ENCODE measurements at regions of chr10 and their contacts with region 1.

Region 1: DNA sequence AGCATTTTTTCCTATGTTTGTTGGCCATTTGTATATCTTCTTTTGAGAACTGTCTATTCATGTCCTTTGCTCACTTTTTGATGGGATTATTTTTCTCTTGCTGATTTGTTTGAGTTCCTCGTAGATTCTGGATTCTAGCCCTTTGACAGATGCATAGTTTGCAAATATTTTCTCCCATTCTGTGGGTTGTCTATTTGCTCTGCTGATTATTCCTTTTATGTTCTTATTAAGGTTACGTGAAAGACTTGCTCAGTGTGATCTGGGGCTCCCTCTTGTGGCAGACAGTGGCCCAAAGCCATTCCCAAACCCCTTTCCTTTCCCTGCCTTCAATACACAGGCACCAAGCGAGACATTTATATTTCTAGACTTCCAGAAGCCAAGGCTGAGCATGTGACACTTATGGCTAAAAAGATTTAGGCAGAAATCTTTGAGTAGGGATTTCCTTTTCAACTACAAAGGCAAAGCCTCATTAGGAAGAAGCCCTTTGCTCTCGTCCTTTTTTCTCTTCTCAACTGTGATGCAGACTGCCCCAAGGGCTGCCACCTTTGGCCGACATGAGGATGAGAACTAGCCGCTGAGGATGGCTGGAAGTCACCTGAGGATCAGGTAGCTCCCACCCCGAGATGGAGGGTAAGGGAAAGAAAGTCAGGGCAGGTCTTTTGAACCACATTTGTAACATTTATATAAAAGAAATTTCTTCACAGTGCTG is 23.6 kb downstream of the ST8SIA6 start:
- DNase-seq: peak; percentile 70
- ATAC-seq: no peak
- H3K4me3 Mint-ChIP-seq: no peak overlapping the region
- H3K27ac Mint-ChIP-seq: no peak overlapping the region
- H3K4me1 Mint-ChIP-seq: peaks cover 53% of the 10 kb centered on the region
- H3K27me3 Mint-ChIP-seq: peaks cover 2% of the 10 kb centered on the region
- CTCF ChIP-seq: peak; percentile 94

Region 2: GRCh38 chr10:16828114-16828568 is 602.7 kb before region 1 on chr10:
- CTCF ChIA-PET with region 1: interaction called, 3 read pairs
- POLR2A ChIA-PET with region 1: no interaction called
- intact Hi-C with region 1: loop called (anchors 10 kb)
- DNase-seq: peak; percentile 66
- ATAC-seq: peak; percentile 95
- H3K4me3 Mint-ChIP-seq: no peak overlapping the region
- H3K27ac Mint-ChIP-seq: no peak overlapping the region
- H3K4me1 Mint-ChIP-seq: no peaks in the 10 kb centered on the region
- H3K27me3 Mint-ChIP-seq: no peaks in the 10 kb centered on the region
- CTCF ChIP-seq: peak; percentile 77

Region 3: DNA sequence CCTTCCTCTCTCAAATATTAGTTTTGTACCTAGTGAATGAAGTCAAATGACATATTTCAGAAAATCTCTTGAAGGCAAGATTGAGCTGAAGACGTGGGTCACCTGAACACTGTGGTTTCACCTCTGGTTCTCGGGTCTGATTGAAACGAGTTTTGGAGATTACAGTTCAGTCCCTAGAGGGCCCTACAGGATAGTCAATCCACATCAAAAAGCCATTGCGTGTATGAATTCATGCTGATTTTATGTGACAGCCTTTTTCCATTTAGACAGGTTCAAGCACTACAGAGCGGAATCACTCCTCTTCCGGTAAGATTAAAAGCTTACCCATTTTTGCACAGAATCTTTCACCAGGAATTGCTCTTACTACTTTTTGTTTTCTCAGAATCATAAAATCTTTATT is 140.6 kb before region 1 on chr10:
- CTCF ChIA-PET with region 1: interaction called, 40 read pairs
- POLR2A ChIA-PET with region 1: no interaction called
- intact Hi-C with region 1: loop called (anchors 5 kb)
- DNase-seq: peak; percentile 35
- ATAC-seq: peak; percentile 97
- H3K4me3 Mint-ChIP-seq: no peak overlapping the region
- H3K27ac Mint-ChIP-seq: peak overlapping the region; percentile 82
- H3K4me1 Mint-ChIP-seq: peaks cover 10% of the 10 kb centered on the region
- H3K27me3 Mint-ChIP-seq: peaks cover 16% of the 10 kb centered on the region
- CTCF ChIP-seq: peak; percentile 39

Region 4: GRCh38 chr10:17375936-17376584 is 54.7 kb before region 1 on chr10:
- CTCF ChIA-PET with region 1: interaction called, 12 read pairs
- POLR2A ChIA-PET with region 1: no interaction called
- intact Hi-C with region 1: no loop called
- DNase-seq: peak; percentile 53
- ATAC-seq: peak; percentile 42
- H3K4me3 Mint-ChIP-seq: no peak overlapping the region
- H3K27ac Mint-ChIP-seq: no peak overlapping the region
- H3K4me1 Mint-ChIP-seq: no peaks in the 10 kb centered on the region
- H3K27me3 Mint-ChIP-seq: peaks cover 1% of the 10 kb centered on the region
- CTCF ChIP-seq: peak; percentile 59

Region 5: DNA sequence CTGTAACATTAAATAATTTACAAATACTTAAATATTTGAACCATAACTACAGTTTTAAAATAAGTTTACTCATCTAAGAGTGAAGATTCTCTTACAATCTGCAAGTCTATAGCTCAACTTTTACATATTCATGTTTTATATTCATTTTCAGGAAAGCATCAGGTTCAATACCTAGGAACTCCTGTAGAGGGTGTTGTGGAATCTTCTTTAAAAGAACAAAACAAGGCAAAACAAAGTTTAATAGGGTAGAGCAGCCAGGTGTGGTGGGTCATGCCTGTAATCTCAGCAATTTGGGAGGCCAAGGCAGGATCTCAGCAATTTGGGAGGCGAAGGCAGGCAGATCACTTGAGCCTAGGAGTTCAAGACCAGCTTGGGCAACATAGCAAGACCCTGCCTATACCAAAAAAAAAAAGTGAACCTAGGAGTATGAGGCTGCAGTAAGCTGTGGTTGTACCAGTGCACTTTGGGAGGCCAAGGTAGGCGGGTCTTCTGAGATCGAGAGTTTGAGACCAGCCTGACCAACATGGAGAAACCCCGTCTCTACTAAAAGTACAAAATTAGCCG is 21.5 kb before region 1 on chr10:
- CTCF ChIA-PET with region 1: interaction called, 34 read pairs
- POLR2A ChIA-PET with region 1: no interaction called
- intact Hi-C with region 1: no loop called
- DNase-seq: no peak
- ATAC-seq: peak; percentile 51
- H3K4me3 Mint-ChIP-seq: no peak overlapping the region
- H3K27ac Mint-ChIP-seq: no peak overlapping the region
- H3K4me1 Mint-ChIP-seq: peaks cover 10% of the 10 kb centered on the region
- H3K27me3 Mint-ChIP-seq: no peaks in the 10 kb centered on the region
- CTCF ChIP-seq: peak; percentile 69

Region 6: DNA sequence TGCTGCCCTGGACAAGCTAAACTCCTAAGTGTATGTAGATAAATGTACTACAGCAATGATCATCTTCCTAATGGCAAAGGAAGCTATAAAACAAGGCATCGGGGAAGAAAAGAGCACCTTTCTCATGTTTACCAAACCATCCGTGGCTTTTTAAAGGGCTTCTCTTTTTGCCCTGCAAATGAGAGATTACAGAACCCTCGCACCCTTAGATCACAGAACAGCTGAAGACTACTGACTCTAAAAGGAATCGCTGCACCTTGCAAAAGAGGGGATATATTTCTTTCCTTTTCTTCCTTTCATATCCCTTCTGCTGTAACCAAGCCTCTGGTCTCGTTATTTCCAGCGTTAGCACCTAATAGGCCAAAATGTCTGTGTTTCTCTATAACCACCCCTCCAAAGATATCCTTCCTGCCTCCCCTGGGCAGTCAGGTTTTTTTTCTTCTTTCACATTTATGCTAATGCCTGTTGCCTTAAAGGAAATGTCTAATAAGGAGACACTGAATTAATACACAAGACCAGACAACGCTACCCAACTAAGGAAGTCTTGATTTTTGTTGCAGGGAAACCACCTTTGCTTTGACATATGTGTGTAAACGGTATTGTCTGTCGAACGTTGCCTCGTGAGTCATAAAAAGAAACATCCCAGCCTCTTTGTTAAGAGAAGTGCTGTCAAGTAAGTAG is 13.0 kb after region 1 on chr10:
- CTCF ChIA-PET with region 1: interaction called, 13 read pairs
- POLR2A ChIA-PET with region 1: no interaction called
- intact Hi-C with region 1: no loop called
- DNase-seq: peak; percentile 37
- ATAC-seq: peak; percentile 96
- H3K4me3 Mint-ChIP-seq: no peak overlapping the region
- H3K27ac Mint-ChIP-seq: no peak overlapping the region
- H3K4me1 Mint-ChIP-seq: peaks cover 12% of the 10 kb centered on the region
- H3K27me3 Mint-ChIP-seq: peaks cover 20% of the 10 kb centered on the region
- CTCF ChIP-seq: no peak

Region 7: GRCh38 chr10:17533731-17534130 is 102.9 kb after region 1 on chr10:
- CTCF ChIA-PET with region 1: no interaction called
- POLR2A ChIA-PET with region 1: no interaction called
- intact Hi-C with region 1: no loop called
- DNase-seq: no peak
- ATAC-seq: no peak
- H3K4me3 Mint-ChIP-seq: no peak overlapping the region
- H3K27ac Mint-ChIP-seq: no peak overlapping the region
- H3K4me1 Mint-ChIP-seq: no peaks in the 10 kb centered on the region
- H3K27me3 Mint-ChIP-seq: peaks cover 1% of the 10 kb centered on the region
- CTCF ChIP-seq: no peak